ENCODE measurements at regions of chr10 and their contacts with region 1.

Region 1: GRCh38 chr10:78047314-78047891 is 13.7 kb downstream of the RPS24 start:
- DNase-seq: peak; percentile 64 to 76 (median 73)
- H3K4me3 ChIP-seq: no peak overlapping the region
- H3K4me3 Mint-ChIP-seq: no peak overlapping the region
- H3K27ac ChIP-seq: no peak overlapping the region
- H3K27ac Mint-ChIP-seq: peak overlapping the region in 1 of 7 donors; percentile 62
- H3K4me1 ChIP-seq: peaks cover 7% of the 10 kb centered on the region
- H3K4me1 Mint-ChIP-seq: peaks cover 3 to 15% (median 11%) of the 10 kb centered on the region in 4 donors
- H3K27me3 ChIP-seq: no peaks in the 10 kb centered on the region
- H3K27me3 Mint-ChIP-seq: no peaks in the 10 kb centered on the region

Region 2: DNA sequence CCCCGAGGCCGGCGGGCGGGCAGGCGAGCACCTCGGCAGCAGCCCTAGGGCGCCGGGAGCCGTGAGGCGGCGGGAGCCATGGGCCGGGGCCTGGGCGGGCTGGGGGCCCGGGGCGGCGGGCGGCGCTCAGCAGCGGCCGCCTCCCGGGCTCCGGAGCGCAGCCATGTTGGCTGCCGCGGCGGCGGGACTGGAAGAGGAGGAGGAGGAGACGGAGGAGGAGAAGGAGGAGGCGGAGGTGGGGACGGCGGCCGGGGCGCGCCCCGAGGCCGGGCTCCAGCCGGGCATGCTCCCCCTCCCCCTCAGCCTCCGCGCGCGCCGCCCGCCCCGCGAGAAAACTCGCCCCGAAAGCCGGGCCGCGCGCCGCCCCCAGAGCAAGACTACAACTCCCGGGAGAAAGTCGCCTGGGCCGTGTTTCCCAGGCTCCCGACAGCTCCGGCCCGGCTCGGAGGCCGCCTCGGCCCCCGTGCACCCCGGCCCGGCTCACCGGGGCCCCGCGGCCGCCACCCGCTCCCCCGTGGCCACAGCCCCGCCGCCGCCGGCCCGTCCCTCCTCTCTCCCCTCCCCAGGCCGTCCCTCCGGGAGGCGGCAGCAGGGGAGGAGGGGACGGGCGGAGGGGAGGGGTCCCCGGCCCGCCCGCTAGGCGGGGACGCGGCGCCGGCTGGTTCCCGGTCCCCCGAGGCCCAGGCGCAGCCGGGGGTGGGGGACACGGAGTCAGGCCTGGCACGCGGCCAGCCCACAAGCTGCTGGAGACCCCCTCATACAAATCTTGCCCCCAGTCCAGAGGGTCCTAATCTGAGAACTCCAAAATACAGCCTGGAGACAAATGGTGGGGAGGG is 120.6 kb before region 1 on chr10 and contains the start of gene DLG5:
- CTCF ChIA-PET with region 1: no interaction called
- POLR2A ChIA-PET with region 1: no interaction called
- intact Hi-C with region 1: no loop called
- DNase-seq: peak in 1 of 5 donors; percentile 13
- H3K4me3 ChIP-seq: peak within 1 kb of the TSS in 1 of 2 donors; percentile 9
- H3K4me3 Mint-ChIP-seq: peak within 1 kb of the TSS; percentile 69 to 88 (median 81)
- H3K27ac ChIP-seq: no peak within 1 kb of the TSS
- H3K27ac Mint-ChIP-seq: peak within 1 kb of the TSS in 2 of 7 donors; percentile 3 to 24
- H3K4me1 ChIP-seq: peaks cover 17% of the 10 kb centered on the region
- H3K4me1 Mint-ChIP-seq: peaks cover 6 to 16% (median 12%) of the 10 kb centered on the region in 4 donors
- H3K27me3 ChIP-seq: peaks cover 9% of the 10 kb centered on the region
- H3K27me3 Mint-ChIP-seq: peaks cover 26 to 30% of the 10 kb centered on the region in 2 donors
- total RNA-seq, gene DLG5: 2.7 to 3.2 TPM

Region 3: DNA sequence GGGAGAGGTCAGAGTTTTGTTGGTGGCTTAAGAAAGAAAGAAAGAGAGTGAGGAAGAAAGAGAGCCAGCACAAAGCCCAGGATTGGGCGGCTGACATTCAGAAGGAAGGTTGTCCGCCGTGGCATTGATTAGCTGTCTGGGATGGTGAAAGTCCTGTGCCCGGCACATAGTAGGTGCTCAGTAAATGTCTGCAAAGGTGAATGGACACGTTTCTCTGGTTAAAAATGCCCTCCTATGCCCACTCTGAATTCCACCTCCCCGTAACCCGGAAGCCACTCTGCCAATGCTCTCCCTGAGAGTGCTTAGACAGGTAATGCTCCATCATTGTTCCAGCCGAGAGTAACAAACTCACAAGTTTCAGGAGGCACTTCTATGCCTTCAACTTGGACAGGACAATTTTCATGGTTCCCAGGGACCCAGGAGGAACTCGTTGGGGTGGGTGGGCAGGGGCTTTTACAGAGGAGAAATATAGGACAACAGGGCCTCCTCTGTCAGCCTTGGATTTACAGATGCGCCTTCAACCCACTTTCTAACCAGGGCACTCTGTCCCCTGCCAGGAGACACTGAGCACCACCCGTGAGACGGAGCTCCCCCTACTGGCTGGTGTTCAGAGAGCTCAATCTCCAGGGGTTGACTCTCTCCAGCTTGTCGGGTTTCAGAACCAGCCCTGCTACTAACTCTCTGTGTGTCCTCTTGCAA is 609.9 kb after region 1 on chr10:
- CTCF ChIA-PET with region 1: interaction called, 60 read pairs
- POLR2A ChIA-PET with region 1: interaction called, 4 read pairs
- intact Hi-C with region 1: no loop called
- DNase-seq: peak; percentile 34 to 48 (median 41)
- H3K4me3 ChIP-seq: no peak overlapping the region
- H3K4me3 Mint-ChIP-seq: no peak overlapping the region
- H3K27ac ChIP-seq: no peak overlapping the region
- H3K27ac Mint-ChIP-seq: no peak overlapping the region
- H3K4me1 ChIP-seq: no peaks in the 10 kb centered on the region
- H3K4me1 Mint-ChIP-seq: no peaks in the 10 kb centered on the region
- H3K27me3 ChIP-seq: no peaks in the 10 kb centered on the region
- H3K27me3 Mint-ChIP-seq: peaks cover 2 to 24% of the 10 kb centered on the region in 2 donors

Region 4: DNA sequence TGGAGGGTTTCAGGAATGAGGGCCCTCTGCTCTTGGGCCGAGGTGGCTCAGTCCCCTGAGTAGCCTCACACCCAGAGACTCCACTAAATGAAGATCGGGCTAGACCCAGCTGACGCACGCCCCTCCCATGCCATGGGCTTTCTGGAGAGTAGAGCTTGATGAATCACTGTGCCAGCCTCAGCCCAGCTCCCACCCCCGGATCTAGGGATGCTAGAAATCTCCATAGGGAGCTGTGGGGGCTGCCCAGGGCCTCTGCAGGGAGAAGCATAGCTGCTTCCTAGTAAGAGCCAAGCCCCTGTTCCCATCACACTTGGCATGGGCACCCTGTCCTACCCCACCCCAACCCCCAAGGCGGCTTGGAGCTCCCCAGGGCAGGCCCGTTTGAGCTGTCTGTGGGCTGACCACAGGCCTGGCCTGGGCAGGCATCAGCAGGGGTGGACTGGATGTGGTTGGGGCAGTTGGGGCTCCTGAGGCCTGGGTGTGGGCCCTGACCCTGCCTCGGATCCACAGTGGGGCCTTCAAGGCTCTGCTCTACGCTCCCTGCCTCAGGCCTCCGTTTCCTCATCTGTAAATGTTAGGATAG is 1142.5 kb after region 1 on chr10:
- CTCF ChIA-PET with region 1: interaction called, 116 read pairs
- POLR2A ChIA-PET with region 1: interaction called, 6 read pairs
- intact Hi-C with region 1: loop called (anchors 1 kb)
- DNase-seq: no peak
- H3K4me3 ChIP-seq: no peak overlapping the region
- H3K4me3 Mint-ChIP-seq: no peak overlapping the region
- H3K27ac ChIP-seq: no peak overlapping the region
- H3K27ac Mint-ChIP-seq: peak overlapping the region in 1 of 7 donors; percentile 1
- H3K4me1 ChIP-seq: no peaks in the 10 kb centered on the region
- H3K4me1 Mint-ChIP-seq: peaks cover 0 to 6% (median under 1%) of the 10 kb centered on the region in 4 donors
- H3K27me3 ChIP-seq: no peaks in the 10 kb centered on the region
- H3K27me3 Mint-ChIP-seq: no peaks in the 10 kb centered on the region

Region 5: GRCh38 chr10:79202188-79203013 is 1155.0 kb after region 1 on chr10:
- CTCF ChIA-PET with region 1: interaction called, 116 read pairs
- POLR2A ChIA-PET with region 1: no interaction called
- intact Hi-C with region 1: no loop called
- DNase-seq: peak in 2 of 5 donors; percentile 7 to 8
- H3K4me3 ChIP-seq: no peak overlapping the region
- H3K4me3 Mint-ChIP-seq: no peak overlapping the region
- H3K27ac ChIP-seq: no peak overlapping the region
- H3K27ac Mint-ChIP-seq: no peak overlapping the region
- H3K4me1 ChIP-seq: no peaks in the 10 kb centered on the region
- H3K4me1 Mint-ChIP-seq: peaks cover 0 to 4% (median under 1%) of the 10 kb centered on the region in 4 donors
- H3K27me3 ChIP-seq: no peaks in the 10 kb centered on the region
- H3K27me3 Mint-ChIP-seq: no peaks in the 10 kb centered on the region

Measured in CD4-positive, alpha-beta memory T cell (primary cell).